ENCODE measurements at regions of chr12 and their contacts with region 1.

Region 1: DNA sequence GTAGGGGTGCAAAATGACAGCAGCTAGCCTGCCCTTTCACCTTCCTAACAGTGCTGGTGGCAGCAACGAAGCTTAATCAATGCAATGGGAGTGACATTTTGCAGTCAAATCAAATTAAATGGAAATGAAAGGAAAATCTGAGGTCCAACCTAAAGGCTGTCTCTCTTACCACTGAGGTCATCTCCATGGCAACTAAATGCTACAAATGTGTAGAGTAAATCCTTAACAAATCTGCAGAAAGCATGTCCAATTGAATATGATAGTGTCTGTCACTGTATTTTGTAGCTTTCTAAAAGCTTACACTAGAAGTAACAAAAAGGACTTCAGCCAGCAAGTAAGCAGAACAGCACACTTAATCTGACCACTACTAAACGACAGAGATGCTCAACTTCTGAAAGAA is 488.8 kb downstream of the BCAT1 start:
- DNase-seq: no peak
- H3K4me3 ChIP-seq: no peak overlapping the region
- H3K27ac ChIP-seq: no peak overlapping the region
- H3K4me1 ChIP-seq: no peaks in the 10 kb centered on the region
- H3K27me3 ChIP-seq: no peaks in the 10 kb centered on the region
- CTCF ChIP-seq: no peak

Region 2: DNA sequence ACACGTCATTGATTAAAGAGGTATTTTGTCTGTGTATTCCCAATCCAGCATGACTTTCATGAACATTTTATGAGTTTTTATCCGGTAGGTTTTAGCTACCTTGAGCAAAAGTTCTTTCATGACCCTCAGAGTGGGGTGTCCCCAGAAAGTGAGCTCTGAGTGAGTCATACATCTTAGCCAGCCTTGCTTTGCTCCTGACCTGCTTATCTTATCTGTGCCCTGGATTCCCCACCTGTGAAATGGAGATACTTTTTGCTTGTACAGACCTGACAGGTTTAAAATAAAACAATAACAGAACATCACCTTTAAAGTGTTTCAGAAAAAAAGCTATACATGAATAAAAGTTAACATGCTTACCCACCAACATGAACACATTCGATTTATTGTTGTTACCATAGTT is 307.8 kb before region 1 on chr12:
- CTCF ChIA-PET with region 1: interaction called, 10 read pairs
- dilution Hi-C with region 1: no loop called
- in situ Hi-C with region 1: no loop called
- intact Hi-C with region 1: no loop called
- DNase-seq: no peak
- H3K4me3 ChIP-seq: no peak overlapping the region
- H3K27ac ChIP-seq: no peak overlapping the region
- H3K4me1 ChIP-seq: no peaks in the 10 kb centered on the region
- H3K27me3 ChIP-seq: no peaks in the 10 kb centered on the region
- CTCF ChIP-seq: no peak